Panc1 (cell line): ENCODE measurements at regions of chr10 and their contacts with region 1.

Region 1: DNA sequence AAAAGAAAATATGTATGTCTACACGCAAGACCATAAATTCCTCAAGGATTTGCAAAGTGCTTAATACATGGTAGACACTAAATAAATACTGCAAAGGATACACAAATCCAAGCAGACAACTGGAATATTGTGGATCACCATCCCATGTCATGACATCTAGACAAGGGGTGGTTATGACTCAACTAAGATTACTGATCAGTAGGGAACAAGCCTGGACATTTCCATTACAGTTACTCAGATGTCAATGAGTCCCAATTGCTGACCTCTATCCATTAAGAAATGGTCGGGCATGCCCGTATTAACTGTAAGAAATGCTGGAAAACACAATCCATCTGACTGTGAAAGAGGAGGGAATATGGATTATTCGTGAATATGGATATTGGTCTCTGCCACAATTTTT is 27.6 kb upstream of the RUFY2 start:
- DNase-seq: no peak
- ATAC-seq: no peak
- H3K4me3 ChIP-seq: no peak overlapping the region
- H3K27ac ChIP-seq: no peak overlapping the region
- H3K4me1 ChIP-seq: no peaks in the 10 kb centered on the region
- H3K27me3 ChIP-seq: no peaks in the 10 kb centered on the region
- CTCF ChIP-seq: no peak

Region 2: GRCh38 chr10:68074775-68075549 is 359.7 kb before region 1 on chr10 and contains the start of gene HERC4:
- CTCF ChIA-PET with region 1: interaction called, 10 read pairs
- POLR2A ChIA-PET with region 1: no interaction called
- in situ Hi-C with region 1: no loop called
- intact Hi-C with region 1: no loop called
- DNase-seq: no peak
- ATAC-seq: peak; percentile 93
- H3K4me3 ChIP-seq: peak within 1 kb of the TSS; percentile 92 to 97
- H3K27ac ChIP-seq: peak within 1 kb of the TSS; percentile 99
- H3K4me1 ChIP-seq: peaks cover 32% of the 10 kb centered on the region
- H3K27me3 ChIP-seq: no peaks in the 10 kb centered on the region
- CTCF ChIP-seq: no peak
- total RNA-seq, gene HERC4: 119 TPM

Region 3: GRCh38 chr10:68406815-68407548 is 27.7 kb before region 1 on chr10 and contains the start of gene RUFY2:
- CTCF ChIA-PET with region 1: no interaction called
- POLR2A ChIA-PET with region 1: interaction called, 11 read pairs
- in situ Hi-C with region 1: no loop called
- intact Hi-C with region 1: no loop called
- DNase-seq: no peak
- ATAC-seq: peak; percentile 96
- H3K4me3 ChIP-seq: peak within 1 kb of the TSS; percentile 71 to 72
- H3K27ac ChIP-seq: peak within 1 kb of the TSS; percentile 83
- H3K4me1 ChIP-seq: peaks cover 13% of the 10 kb centered on the region
- H3K27me3 ChIP-seq: no peaks in the 10 kb centered on the region
- CTCF ChIP-seq: peak; percentile 100
- total RNA-seq, gene RUFY2: 25.1 TPM

Region 4: DNA sequence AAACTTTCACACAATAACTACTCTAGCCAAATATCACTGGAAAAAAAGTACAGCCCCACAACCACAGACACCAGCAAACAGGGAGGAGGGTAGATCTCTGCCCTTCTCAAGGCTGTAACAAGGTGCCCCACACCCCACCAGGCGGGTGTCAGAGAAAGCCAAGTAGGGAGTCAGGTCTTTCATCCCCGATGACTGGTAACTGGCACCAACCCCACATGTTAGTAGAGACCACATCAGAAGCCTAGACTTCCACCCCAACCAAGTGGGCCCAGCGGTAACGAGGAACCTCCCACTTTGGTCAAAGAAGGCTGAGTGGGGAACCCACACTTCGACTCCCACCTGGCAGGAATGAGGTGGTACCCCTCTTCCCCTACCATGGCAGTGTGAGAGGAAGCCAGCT is 11.1 kb before region 1 on chr10:
- CTCF ChIA-PET with region 1: no interaction called
- POLR2A ChIA-PET with region 1: no interaction called
- in situ Hi-C with region 1: no loop called
- intact Hi-C with region 1: no loop called
- DNase-seq: no peak
- ATAC-seq: no peak
- H3K4me3 ChIP-seq: no peak overlapping the region
- H3K27ac ChIP-seq: no peak overlapping the region
- H3K4me1 ChIP-seq: no peaks in the 10 kb centered on the region
- H3K27me3 ChIP-seq: no peaks in the 10 kb centered on the region
- CTCF ChIP-seq: no peak

Region 5: DNA sequence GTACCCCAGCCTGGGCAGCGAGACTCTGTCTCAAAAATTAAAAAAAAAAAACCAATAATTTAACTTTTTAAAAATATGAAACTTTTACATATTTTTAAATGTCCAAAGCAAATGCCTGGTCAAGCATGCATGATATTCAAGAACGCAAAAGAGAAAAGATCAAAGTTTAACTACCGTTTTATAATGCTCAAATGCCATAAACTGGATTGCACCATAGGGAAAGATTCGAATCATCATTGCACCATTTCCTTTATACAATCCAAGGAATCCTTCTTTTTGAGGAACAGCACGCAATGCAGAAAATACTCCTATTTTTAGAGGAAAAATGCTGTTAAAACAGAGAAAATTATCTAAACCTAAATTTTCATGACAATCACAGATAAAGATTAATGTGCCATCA is 71.8 kb after region 1 on chr10:
- CTCF ChIA-PET with region 1: no interaction called
- POLR2A ChIA-PET with region 1: interaction called, 15 read pairs
- in situ Hi-C with region 1: no loop called
- intact Hi-C with region 1: no loop called
- DNase-seq: no peak
- ATAC-seq: no peak
- H3K4me3 ChIP-seq: no peak overlapping the region
- H3K27ac ChIP-seq: no peak overlapping the region
- H3K4me1 ChIP-seq: no peaks in the 10 kb centered on the region
- H3K27me3 ChIP-seq: no peaks in the 10 kb centered on the region
- CTCF ChIP-seq: no peak

Region 6: DNA sequence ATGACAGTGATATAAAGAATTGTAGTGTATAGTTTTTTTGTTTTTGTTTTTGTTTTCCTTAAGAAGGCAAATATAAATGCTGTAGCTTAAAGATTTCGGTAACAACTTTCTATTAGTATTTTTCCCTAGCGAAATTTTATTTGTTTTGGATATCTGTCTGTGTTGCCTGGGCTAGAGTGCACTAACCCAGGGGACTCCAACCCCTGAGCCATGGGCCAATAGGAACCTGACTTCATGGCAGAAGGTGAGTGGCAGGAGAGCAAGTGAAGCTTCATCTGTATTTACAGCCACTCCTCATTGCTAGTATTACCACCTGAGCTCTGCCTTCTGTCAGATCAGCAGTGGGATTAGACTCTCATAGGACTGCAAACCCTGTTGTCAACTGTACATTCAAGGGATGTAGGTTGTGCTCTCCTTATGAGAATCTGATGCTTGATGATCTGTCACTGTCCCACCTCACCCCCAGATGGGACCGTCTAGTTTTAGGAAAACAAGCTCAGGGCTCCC is 221.0 kb after region 1 on chr10:
- CTCF ChIA-PET with region 1: no interaction called
- POLR2A ChIA-PET with region 1: no interaction called
- in situ Hi-C with region 1: no loop called
- intact Hi-C with region 1: no loop called
- DNase-seq: no peak
- ATAC-seq: no peak
- H3K4me3 ChIP-seq: no peak overlapping the region
- H3K27ac ChIP-seq: no peak overlapping the region
- H3K4me1 ChIP-seq: no peaks in the 10 kb centered on the region
- H3K27me3 ChIP-seq: no peaks in the 10 kb centered on the region
- CTCF ChIP-seq: no peak